Heart right ventricle (tissue), 16 donors: ENCODE measurements at regions of chr1 and their contacts with region 1.

Region 1: GRCh38 chr1:230917284-230918135 is 49.2 kb upstream of the C1orf198 start:
- DNase-seq: peak; percentile 49 to 74
- ATAC-seq: peak; percentile 69 to 89 (median 80)
- H3K4me3 ChIP-seq: no peak overlapping the region
- H3K27ac ChIP-seq: no peak overlapping the region
- H3K4me1 ChIP-seq: peaks cover 0 to 6% (median 0%) of the 10 kb centered on the region in 9 donors
- H3K27me3 ChIP-seq: no peaks in the 10 kb centered on the region
- CTCF ChIP-seq: peak; percentile 55 to 73 (median 61)

Region 2: GRCh38 chr1:230797942-230798418 is 119.5 kb before region 1 on chr1:
- intact Hi-C with region 1: loop called (anchors 1 to 2 kb)
- DNase-seq: peak; percentile 41 to 75
- ATAC-seq: peak; percentile 81 to 93 (median 90)
- H3K4me3 ChIP-seq: no peak overlapping the region
- H3K27ac ChIP-seq: no peak overlapping the region
- H3K4me1 ChIP-seq: no peaks in the 10 kb centered on the region
- H3K27me3 ChIP-seq: no peaks in the 10 kb centered on the region
- CTCF ChIP-seq: peak; percentile 60 to 90 (median 78)

Region 3: DNA sequence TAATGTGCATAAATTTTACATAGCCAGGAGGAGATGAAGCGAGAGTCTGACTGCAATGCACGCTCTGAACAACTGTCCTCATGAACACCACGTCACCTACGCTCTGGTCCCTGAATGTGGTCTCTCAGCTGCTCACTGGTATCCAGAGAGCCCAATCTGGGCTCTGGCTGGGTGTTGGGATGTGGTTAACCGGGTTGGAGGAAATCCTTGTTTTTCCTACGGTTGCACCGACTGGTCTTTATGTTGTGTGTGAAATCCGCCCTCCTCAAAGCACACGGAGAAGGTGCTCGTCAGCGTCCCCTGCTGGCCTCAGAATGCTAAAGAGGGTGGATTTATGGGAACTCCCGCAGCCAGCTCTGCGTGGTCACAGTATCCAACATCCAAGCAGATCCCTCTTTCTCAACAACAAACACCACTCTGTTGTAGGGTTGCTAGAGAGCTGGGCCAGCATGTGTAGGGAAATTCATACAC is 174.4 kb after region 1 on chr1:
- intact Hi-C with region 1: loop called in 1 of 10 experiments (anchors 10 kb)
- DNase-seq: peak in 1 of 2 donors; percentile 22
- ATAC-seq: peak in 1 of 8 donors; percentile 42
- H3K4me3 ChIP-seq: no peak overlapping the region
- H3K27ac ChIP-seq: no peak overlapping the region
- H3K4me1 ChIP-seq: peaks cover 0 to 17% (median 7%) of the 10 kb centered on the region in 9 donors
- H3K27me3 ChIP-seq: peaks cover 0 to 8% (median 0%) of the 10 kb centered on the region in 7 donors
- CTCF ChIP-seq: peak in 8 of 9 donors; percentile 19 to 61 (median 38)